Left ventricle myocardium inferior (tissue), 1 donor: ENCODE measurements at regions of chr9 and their contacts with region 1.

Region 1: GRCh38 chr9:70418822-70419545 is 4.5 kb upstream of the KLF9 start:
- DNase-seq: peak; percentile 97
- H3K4me3 ChIP-seq: peak overlapping the region; percentile 73
- H3K27ac ChIP-seq: peak overlapping the region; percentile 100
- H3K4me1 ChIP-seq: peaks cover 78% of the 10 kb centered on the region
- H3K27me3 ChIP-seq: no peaks in the 10 kb centered on the region
- CTCF ChIP-seq: no peak

Region 2: GRCh38 chr9:70466976-70467561 is 48.1 kb after region 1 on chr9:
- intact Hi-C with region 1: loop called (anchors 5 kb)
- DNase-seq: no peak
- H3K4me3 ChIP-seq: no peak overlapping the region
- H3K27ac ChIP-seq: peak overlapping the region; percentile 93
- H3K4me1 ChIP-seq: peaks cover 66% of the 10 kb centered on the region
- H3K27me3 ChIP-seq: no peaks in the 10 kb centered on the region
- CTCF ChIP-seq: no peak

Region 3: DNA sequence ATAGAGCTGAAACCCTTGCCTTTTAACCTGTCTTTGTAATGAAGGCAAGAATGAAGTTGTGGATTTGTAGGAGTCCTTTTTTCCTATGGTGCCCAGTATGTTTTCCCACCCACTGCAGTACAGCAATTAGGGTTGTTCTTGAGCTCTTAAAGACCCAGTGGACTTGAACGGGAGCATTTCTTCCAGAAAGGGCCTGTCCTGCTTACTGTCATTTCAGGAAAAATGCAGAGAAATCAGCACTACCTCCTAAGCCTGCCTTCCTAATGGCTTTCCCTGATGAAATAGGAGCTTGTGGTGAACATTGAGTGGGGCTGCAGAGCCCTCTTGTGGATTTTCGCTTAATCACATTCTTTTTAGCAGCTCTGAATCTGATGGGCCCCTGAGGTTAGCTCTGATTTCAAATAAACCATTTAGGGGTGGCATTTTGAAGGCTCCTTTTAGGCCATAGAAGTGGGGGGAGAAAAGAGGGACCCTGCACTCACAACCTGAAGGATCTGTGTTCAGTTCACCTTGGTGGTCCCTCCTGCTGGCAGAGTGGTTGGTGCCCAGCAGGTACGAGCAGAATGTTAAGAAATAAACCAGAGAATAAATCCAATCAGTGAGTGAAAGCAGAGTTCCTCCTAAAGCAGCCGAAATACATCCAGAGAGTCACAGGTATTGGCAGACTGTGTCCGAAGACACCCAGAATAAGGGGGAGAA is 183.5 kb after region 1 on chr9:
- intact Hi-C with region 1: loop called (anchors 5 kb)
- DNase-seq: no peak
- H3K4me3 ChIP-seq: peak overlapping the region; percentile 48
- H3K27ac ChIP-seq: peak overlapping the region; percentile 95
- H3K4me1 ChIP-seq: peaks cover 37% of the 10 kb centered on the region
- H3K27me3 ChIP-seq: no peaks in the 10 kb centered on the region
- CTCF ChIP-seq: peak; percentile 88